SK-N-SH (cell line): ENCODE measurements at regions of chr14 and their contacts with region 1.

Region 1: DNA sequence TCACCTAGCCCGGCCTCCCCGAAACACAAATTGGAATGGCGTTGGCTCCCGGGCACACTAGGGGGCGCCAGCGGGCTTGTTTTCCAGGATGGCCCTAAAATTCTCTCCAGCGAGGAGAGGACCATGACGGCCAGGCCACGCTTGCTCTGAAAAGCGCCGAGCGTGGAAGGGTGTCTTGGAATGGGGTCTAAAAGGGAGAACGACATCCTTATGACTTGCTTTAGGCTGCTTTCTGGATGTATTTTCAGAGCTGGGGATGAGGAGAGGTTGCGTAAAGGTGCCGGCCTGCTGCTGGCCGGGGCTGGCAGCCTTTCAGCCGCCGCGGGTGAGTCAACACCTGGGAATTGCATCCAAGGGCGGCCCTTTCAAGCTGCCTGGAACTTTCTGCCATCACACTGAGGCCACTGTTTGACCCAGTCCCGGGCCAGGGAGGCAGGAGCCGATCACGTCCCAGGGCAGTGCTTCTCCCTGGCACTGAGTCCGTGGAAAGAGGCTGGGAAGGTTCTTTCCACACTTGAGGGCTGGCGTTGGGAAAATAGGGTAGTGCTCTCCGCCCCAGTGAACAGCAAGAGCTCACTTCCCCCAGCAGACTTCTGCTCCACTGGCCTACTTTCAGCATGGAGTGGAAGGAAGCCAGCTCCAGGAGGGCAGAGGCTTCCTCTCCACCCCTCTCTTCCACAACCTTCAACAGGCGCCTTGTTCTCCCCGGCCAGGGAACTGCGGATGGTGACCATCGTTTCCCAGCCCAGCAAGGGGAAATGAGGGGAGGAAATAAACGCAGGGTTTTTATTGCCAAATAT is 216.2 kb downstream of the TTC8 start:
- DNase-seq: peak; percentile 83
- H3K4me3 ChIP-seq: peak overlapping the region; percentile 48 to 59
- H3K27ac ChIP-seq: peak overlapping the region; percentile 89 to 98
- H3K4me1 ChIP-seq: peaks cover 12 to 19% of the 10 kb centered on the region in 2 experiments
- H3K27me3 ChIP-seq: no peaks in the 10 kb centered on the region
- CTCF ChIP-seq: peak; percentile 99
- EP300 ChIP-seq: peak in 1 of 2 experiments; percentile 34; a peak in 3 of 4 replicates
- RAD21 ChIP-seq: peak; percentile 92

Region 2: DNA sequence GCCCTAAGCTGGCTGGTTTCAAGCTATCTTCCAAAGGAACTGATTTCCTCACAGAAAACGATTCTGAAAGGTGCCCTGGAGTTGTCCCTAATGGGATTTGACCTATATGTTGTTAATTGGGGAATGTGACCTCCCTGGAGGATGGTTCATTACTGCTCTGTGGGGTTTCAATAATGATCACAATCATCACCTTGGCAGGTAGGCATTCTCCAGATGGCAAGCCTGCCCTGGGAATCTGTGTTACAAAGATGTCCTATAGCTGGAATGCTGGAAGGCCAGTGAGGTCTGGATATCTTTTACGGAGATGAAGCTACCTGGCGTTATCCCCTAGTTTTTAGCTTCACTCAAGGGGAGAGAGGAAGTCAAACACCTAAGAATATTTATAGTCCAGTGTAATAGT is 48.6 kb before region 1 on chr14:
- CTCF ChIA-PET with region 1: no interaction called
- POLR2A ChIA-PET with region 1: no interaction called
- DNase-seq: no peak
- H3K4me3 ChIP-seq: no peak overlapping the region
- H3K27ac ChIP-seq: no peak overlapping the region
- H3K4me1 ChIP-seq: peaks cover 5 to 32% of the 10 kb centered on the region in 2 experiments; a peak in 3 of 4 replicates
- H3K27me3 ChIP-seq: no peaks in the 10 kb centered on the region
- CTCF ChIP-seq: no peak
- EP300 ChIP-seq: no peak
- RAD21 ChIP-seq: no peak

Region 3: DNA sequence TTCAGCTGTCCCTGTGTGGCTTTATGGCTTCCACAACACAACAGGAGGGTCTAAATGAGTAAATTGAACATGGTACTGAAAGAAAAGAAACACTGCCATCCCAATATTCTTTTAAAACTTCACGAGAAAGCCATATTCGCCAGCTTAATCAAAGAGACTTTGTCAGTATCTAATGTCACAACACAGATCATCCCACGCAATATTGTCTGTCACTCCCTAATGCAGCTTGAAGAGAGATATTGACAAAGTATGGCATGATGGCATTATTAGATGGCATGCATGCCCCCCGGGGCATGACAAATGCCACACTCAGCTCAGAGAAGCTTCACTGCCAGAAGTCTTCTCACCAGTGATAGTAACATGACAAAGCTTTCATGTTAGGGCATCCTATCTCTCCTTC is 18.4 kb before region 1 on chr14:
- CTCF ChIA-PET with region 1: interaction called, 13 read pairs
- POLR2A ChIA-PET with region 1: no interaction called
- DNase-seq: no peak
- H3K4me3 ChIP-seq: no peak overlapping the region
- H3K27ac ChIP-seq: no peak overlapping the region
- H3K4me1 ChIP-seq: no peaks in the 10 kb centered on the region; a peak in 1 of 4 replicates
- H3K27me3 ChIP-seq: no peaks in the 10 kb centered on the region
- CTCF ChIP-seq: no peak
- EP300 ChIP-seq: no peak
- RAD21 ChIP-seq: no peak

Region 4: GRCh38 chr14:89912667-89913211 is 872.1 kb after region 1 on chr14:
- CTCF ChIA-PET with region 1: interaction called, 10 read pairs
- POLR2A ChIA-PET with region 1: no interaction called
- DNase-seq: peak; percentile 37
- H3K4me3 ChIP-seq: no peak overlapping the region
- H3K27ac ChIP-seq: peak overlapping the region in 1 of 2 experiments; percentile 90; a peak in 3 of 4 replicates
- H3K4me1 ChIP-seq: peaks cover 20 to 24% of the 10 kb centered on the region in 2 experiments
- H3K27me3 ChIP-seq: no peaks in the 10 kb centered on the region
- CTCF ChIP-seq: no peak
- EP300 ChIP-seq: peak in 1 of 2 experiments; percentile 24; a peak in 1 of 4 replicates
- RAD21 ChIP-seq: no peak